CD4-positive, alpha-beta memory T cell (primary cell): ENCODE measurements at regions of chr15 and their contacts with region 1.

Region 1: DNA sequence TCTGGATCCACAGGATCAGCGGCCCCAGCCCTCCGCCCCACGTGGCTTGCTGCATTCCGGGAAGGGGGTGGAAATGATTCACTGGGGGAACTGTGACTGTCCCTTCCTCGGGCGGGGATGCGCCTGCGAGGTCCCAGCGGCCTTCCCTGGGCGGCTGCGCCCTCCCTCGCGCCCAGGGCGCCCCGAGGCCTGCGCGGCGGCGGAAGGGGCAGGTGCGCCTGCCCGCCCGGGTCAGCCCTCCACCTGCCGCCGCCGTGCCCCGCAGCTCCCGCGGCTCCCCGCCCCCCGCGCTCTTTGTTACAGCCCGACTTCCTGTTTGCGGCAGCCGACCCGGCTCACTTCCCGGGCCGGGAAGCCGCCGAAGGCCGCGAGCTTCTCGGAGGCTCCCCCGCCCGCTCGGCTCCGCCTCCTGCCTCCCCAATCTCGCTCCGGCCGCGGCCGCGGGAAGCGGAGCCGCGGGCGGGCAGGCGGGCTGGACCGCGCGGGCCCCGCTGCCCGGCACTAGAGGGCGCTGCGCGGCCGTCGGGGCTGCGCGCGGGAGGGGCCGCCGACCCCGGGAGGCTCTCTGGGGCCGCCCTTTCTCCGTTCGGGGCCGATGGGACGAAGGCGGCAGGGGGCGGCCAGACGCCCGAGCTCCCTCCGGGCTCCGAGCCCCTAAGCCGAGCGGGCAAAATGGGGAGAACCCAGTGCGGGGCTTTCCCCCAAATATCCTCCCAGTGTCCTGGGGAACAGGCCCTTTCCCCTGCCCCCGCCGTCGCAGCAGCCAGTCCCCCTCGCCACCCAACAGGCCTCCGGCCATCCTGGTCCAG is 11.5 kb upstream of the CHAC1 start:
- DNase-seq: peak; percentile 62 to 73 (median 67)
- H3K4me3 ChIP-seq: peak overlapping the region; percentile 58 to 83
- H3K4me3 Mint-ChIP-seq: peak overlapping the region; percentile 75 to 87 (median 84)
- H3K27ac ChIP-seq: peak overlapping the region; percentile 64
- H3K27ac Mint-ChIP-seq: peak overlapping the region in 6 of 7 donors; percentile 66 to 94 (median 87)
- H3K4me1 ChIP-seq: peaks cover 27% of the 10 kb centered on the region
- H3K4me1 Mint-ChIP-seq: peaks cover 13 to 40% (median 31%) of the 10 kb centered on the region in 4 donors
- H3K27me3 ChIP-seq: no peaks in the 10 kb centered on the region
- H3K27me3 Mint-ChIP-seq: no peaks in the 10 kb centered on the region

Region 2: DNA sequence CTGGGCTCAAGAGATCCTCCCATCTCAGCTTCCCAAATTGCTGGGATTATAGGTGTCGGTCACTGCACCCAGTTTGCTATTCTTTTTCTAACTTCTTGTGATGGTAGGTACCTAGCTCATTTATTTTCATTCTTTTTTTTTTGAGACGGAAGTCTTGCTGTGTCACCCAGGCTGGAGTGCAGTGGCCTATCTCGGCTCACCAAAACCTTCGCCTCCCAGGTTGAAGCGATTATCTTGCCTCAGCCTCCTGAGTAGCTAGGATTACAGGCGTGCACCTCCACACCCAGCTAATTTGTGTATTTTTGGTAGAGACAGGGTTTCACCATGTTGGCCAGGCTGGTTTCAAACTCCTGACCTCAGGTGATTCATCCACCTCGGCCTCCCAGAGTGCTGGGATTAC is 276.8 kb before region 1 on chr15:
- CTCF ChIA-PET with region 1: no interaction called
- POLR2A ChIA-PET with region 1: no interaction called
- intact Hi-C with region 1: no loop called
- DNase-seq: no peak
- H3K4me3 ChIP-seq: no peak overlapping the region
- H3K4me3 Mint-ChIP-seq: no peak overlapping the region
- H3K27ac ChIP-seq: no peak overlapping the region
- H3K27ac Mint-ChIP-seq: no peak overlapping the region
- H3K4me1 ChIP-seq: no peaks in the 10 kb centered on the region
- H3K4me1 Mint-ChIP-seq: no peaks in the 10 kb centered on the region
- H3K27me3 ChIP-seq: no peaks in the 10 kb centered on the region
- H3K27me3 Mint-ChIP-seq: no peaks in the 10 kb centered on the region

Region 3: GRCh38 chr15:40928821-40929659 is 12.7 kb before region 1 on chr15 and contains the start of gene DLL4:
- CTCF ChIA-PET with region 1: interaction called, 54 read pairs
- POLR2A ChIA-PET with region 1: interaction called, 27 read pairs
- intact Hi-C with region 1: loop called (anchors 1 kb)
- DNase-seq: peak in 4 of 5 donors; percentile 21 to 49 (median 38)
- H3K4me3 ChIP-seq: peak within 1 kb of the TSS; percentile 42 to 57
- H3K4me3 Mint-ChIP-seq: peak within 1 kb of the TSS; percentile 77 to 92 (median 84)
- H3K27ac ChIP-seq: no peak within 1 kb of the TSS
- H3K27ac Mint-ChIP-seq: peak within 1 kb of the TSS in 1 of 7 donors; percentile 65
- H3K4me1 ChIP-seq: peaks cover 52% of the 10 kb centered on the region
- H3K4me1 Mint-ChIP-seq: peaks cover 23 to 62% (median 34%) of the 10 kb centered on the region in 4 donors
- H3K27me3 ChIP-seq: peaks cover 33% of the 10 kb centered on the region
- H3K27me3 Mint-ChIP-seq: peaks cover 46 to 54% of the 10 kb centered on the region in 2 donors
- total RNA-seq, gene DLL4: not detected

Region 4: GRCh38 chr15:40952901-40953712 is 11.4 kb after region 1 on chr15 and contains the start of gene CHAC1:
- CTCF ChIA-PET with region 1: interaction called, 44 read pairs
- POLR2A ChIA-PET with region 1: interaction called, 44 read pairs
- intact Hi-C with region 1: loop called (anchors 1 kb)
- DNase-seq: peak; percentile 94 to 97 (median 94)
- H3K4me3 ChIP-seq: peak within 1 kb of the TSS; percentile 69 to 79
- H3K4me3 Mint-ChIP-seq: peak within 1 kb of the TSS; percentile 91 to 98 (median 94)
- H3K27ac ChIP-seq: peak within 1 kb of the TSS; percentile 42
- H3K27ac Mint-ChIP-seq: peak within 1 kb of the TSS; percentile 82 to 94 (median 88)
- H3K4me1 ChIP-seq: peaks cover 14% of the 10 kb centered on the region
- H3K4me1 Mint-ChIP-seq: peaks cover 5 to 22% (median 16%) of the 10 kb centered on the region in 4 donors
- H3K27me3 ChIP-seq: no peaks in the 10 kb centered on the region
- H3K27me3 Mint-ChIP-seq: peaks cover 0 to 2% of the 10 kb centered on the region in 2 donors
- total RNA-seq, gene CHAC1: 1.2 TPM

Region 5: GRCh38 chr15:41116116-41116871 is 174.6 kb after region 1 on chr15 and contains the start of gene INO80:
- CTCF ChIA-PET with region 1: no interaction called
- POLR2A ChIA-PET with region 1: interaction called, 6 read pairs
- intact Hi-C with region 1: loop called (anchors 5 kb)
- DNase-seq: peak; percentile 96 to 97 (median 97)
- H3K4me3 ChIP-seq: peak within 1 kb of the TSS; percentile 95 to 100
- H3K4me3 Mint-ChIP-seq: peak within 1 kb of the TSS; percentile 93 to 99 (median 96)
- H3K27ac ChIP-seq: peak within 1 kb of the TSS; percentile 84
- H3K27ac Mint-ChIP-seq: peak within 1 kb of the TSS; percentile 87 to 100 (median 99)
- H3K4me1 ChIP-seq: peaks cover 31% of the 10 kb centered on the region
- H3K4me1 Mint-ChIP-seq: peaks cover 15 to 36% (median 26%) of the 10 kb centered on the region in 4 donors
- H3K27me3 ChIP-seq: no peaks in the 10 kb centered on the region
- H3K27me3 Mint-ChIP-seq: peaks cover 0 to 2% of the 10 kb centered on the region in 2 donors
- total RNA-seq, gene INO80: 29.7 to 34.4 TPM

Region 6: GRCh38 chr15:41367418-41367817 is 425.7 kb after region 1 on chr15:
- CTCF ChIA-PET with region 1: no interaction called
- POLR2A ChIA-PET with region 1: no interaction called
- intact Hi-C with region 1: no loop called
- DNase-seq: no peak
- H3K4me3 ChIP-seq: no peak overlapping the region
- H3K4me3 Mint-ChIP-seq: no peak overlapping the region
- H3K27ac ChIP-seq: no peak overlapping the region
- H3K27ac Mint-ChIP-seq: peak overlapping the region in 1 of 7 donors; percentile 29
- H3K4me1 ChIP-seq: no peaks in the 10 kb centered on the region
- H3K4me1 Mint-ChIP-seq: peaks cover 0 to 1% (median under 1%) of the 10 kb centered on the region in 4 donors
- H3K27me3 ChIP-seq: no peaks in the 10 kb centered on the region
- H3K27me3 Mint-ChIP-seq: no peaks in the 10 kb centered on the region